H1 (cell line): ENCODE measurements at regions of chr2 and their contacts with region 1.

Region 1: GRCh38 chr2:24399434-24400206 is 39.3 kb upstream of the ITSN2 start:
- DNase-seq: no peak
- H3K4me3 ChIP-seq: no peak overlapping the region
- H3K27ac ChIP-seq: no peak overlapping the region
- H3K4me1 ChIP-seq: no peaks in the 10 kb centered on the region
- H3K27me3 ChIP-seq: no peaks in the 10 kb centered on the region
- CTCF ChIP-seq: no peak
- EP300 ChIP-seq: no peak
- POLR2A ChIP-seq: no peak
- RAD21 ChIP-seq: no peak

Region 2: GRCh38 chr2:24409700-24410556 is 10.3 kb after region 1 on chr2:
- CTCF ChIA-PET with region 1: interaction called, 19 read pairs
- POLR2A ChIA-PET with region 1: no interaction called
- DNase-seq: no peak
- H3K4me3 ChIP-seq: no peak overlapping the region
- H3K27ac ChIP-seq: no peak overlapping the region
- H3K4me1 ChIP-seq: peaks cover 0 to 7% (median 3%) of the 10 kb centered on the region in 4 experiments; a peak in 2 of 7 replicates
- H3K27me3 ChIP-seq: no peaks in the 10 kb centered on the region
- CTCF ChIP-seq: peak in 2 of 3 experiments; percentile 76 to 90; a peak in 3 of 4 replicates
- EP300 ChIP-seq: no peak
- POLR2A ChIP-seq: no peak
- RAD21 ChIP-seq: peak; percentile 90 to 97

Region 3: DNA sequence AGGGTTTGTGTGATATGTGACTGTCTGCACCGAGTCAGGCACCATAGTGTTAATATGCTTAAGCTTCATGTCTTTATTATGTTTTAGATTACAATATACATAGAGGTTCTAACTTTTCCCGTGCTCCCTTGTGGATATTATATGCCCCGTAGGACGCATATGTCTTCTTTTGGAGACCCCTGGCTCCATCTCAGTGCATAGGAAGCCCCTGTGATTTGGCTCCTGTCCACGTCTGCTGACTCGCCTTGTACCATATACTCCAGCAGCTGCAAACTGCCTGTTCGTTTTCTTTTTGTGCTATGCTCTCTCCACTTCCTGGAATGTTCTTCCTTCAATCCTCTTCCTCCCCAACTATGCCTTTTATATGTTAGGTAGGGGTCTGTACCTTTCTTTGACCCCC is 282.7 kb after region 1 on chr2:
- CTCF ChIA-PET with region 1: no interaction called
- POLR2A ChIA-PET with region 1: no interaction called
- DNase-seq: no peak
- H3K4me3 ChIP-seq: no peak overlapping the region
- H3K27ac ChIP-seq: no peak overlapping the region
- H3K4me1 ChIP-seq: no peaks in the 10 kb centered on the region
- H3K27me3 ChIP-seq: no peaks in the 10 kb centered on the region
- CTCF ChIP-seq: no peak
- EP300 ChIP-seq: no peak
- POLR2A ChIP-seq: no peak
- RAD21 ChIP-seq: no peak